ENCODE measurements at regions of chr7 and their contacts with region 1.

Region 1: GRCh38 chr7:98106647-98107445 is at the start of gene LMTK2:
- DNase-seq: peak; percentile 36
- H3K4me3 ChIP-seq: peak within 1 kb of the TSS; percentile 84
- CTCF ChIP-seq: peak; percentile 95

Region 2: DNA sequence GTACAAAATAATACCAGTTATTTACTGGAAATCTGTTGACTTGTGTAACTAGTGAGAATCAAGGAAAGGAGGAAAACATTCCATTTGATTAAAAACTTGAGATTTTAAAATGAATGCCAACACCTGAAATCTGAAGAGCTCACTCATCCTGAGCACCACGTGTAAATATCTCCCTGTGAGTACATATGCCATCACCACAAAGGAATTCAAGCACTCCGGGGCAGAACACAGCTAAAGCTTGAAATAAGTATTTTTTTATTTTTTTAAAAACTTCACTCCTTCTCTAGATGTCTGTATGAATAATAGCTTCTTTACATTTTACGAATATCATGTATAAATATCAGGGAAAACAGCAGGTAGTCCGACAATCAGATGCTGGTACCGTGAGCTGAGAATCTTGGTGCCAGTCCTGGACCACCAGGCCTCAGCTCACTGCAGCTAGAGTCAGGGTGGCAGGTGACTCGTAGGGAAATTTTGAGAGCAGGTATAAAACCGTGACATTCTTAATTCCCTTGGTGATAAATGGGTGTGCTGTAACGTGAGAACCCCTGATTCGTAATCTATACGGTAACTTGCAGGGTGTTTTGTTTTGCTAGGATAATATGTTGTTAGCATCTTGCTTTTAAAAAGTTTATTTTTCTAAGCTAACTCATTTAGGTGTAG is 12.5 kb after region 1 on chr7:
- CTCF ChIA-PET with region 1: interaction called, 33 read pairs
- POLR2A ChIA-PET with region 1: no interaction called
- DNase-seq: peak; percentile 37
- H3K4me3 ChIP-seq: no peak overlapping the region
- CTCF ChIP-seq: no peak

Region 3: DNA sequence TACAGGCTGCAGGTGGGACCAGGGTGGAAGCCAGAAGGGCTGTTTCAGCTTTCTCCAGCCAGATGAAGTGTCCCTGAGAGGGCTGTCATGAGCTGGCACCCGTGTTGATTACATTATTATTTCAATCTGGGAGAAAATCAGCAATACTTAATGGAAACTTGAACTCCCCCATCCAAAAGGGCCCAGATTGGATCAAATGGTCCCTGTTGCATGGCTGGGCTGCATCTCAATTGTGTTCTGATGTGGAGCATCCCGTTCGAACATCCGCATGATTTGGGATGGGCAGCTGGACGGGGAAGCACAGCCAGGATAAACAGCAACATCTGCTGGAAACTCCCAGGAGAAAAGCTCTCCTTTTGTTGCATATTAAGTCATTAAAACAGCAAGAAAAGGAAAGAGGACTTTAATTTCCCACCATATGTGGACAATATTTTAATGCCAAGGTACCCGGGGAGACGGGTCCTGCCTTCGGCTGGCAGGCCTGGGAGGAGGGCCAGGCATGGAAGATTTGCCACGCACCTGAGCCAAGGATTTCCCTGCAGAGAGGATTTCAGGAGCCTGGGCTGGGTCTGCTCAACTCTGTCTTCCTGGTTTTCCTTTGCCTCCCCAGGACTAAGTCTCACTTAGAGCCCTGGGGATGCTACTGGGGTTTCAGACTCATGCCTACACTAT is 562.6 kb after region 1 on chr7:
- CTCF ChIA-PET with region 1: no interaction called
- POLR2A ChIA-PET with region 1: no interaction called
- DNase-seq: no peak
- H3K4me3 ChIP-seq: no peak overlapping the region
- CTCF ChIP-seq: no peak

Measured in AG04449 (cell line).